ENCODE measurements at regions of chr18 and their contacts with region 1.

Region 1: DNA sequence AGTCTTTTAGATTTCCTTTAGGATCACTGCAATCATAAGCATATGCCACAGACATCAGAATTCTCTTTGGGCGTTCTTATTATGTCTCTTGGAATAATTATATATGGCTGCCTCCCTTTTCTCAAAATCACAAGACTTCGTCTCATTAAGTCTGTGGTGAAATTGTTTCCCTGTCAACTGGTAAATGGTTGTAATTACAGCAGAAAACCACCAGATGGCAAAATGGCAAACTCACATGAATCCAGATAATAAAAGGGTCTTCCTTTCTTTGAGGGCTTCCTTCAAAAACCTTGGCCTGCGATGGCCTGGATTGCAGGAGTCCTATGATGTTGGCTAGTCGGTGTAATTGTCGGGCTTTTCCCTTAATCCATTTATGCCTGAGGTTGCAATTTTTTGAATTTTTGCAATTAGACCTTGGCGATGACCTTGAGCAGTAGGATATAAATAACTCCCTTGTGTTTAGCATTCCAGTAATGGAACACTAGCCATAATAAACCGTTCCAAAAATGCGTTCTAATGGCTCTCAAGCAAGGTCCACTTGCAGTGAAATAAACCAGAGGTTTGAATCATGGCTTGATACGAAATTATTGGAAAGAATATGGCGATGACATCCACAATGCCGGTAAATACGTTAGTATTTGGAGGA is 656.4 kb downstream of the MBD2 start:
- DNase-seq: peak in 4 of 9 donors; percentile 1 to 10 (median 4)
- ATAC-seq: no peak
- H3K4me3 ChIP-seq: no peak overlapping the region
- H3K4me3 Mint-ChIP-seq: no peak overlapping the region
- H3K27ac ChIP-seq: no peak overlapping the region
- H3K27ac Mint-ChIP-seq: no peak overlapping the region
- H3K4me1 ChIP-seq: no peaks in the 10 kb centered on the region
- H3K4me1 Mint-ChIP-seq: no peaks in the 10 kb centered on the region
- H3K27me3 ChIP-seq: no peaks in the 10 kb centered on the region
- H3K27me3 Mint-ChIP-seq: peaks cover 0 to 11% (median 4%) of the 10 kb centered on the region in 5 donors

Region 2: GRCh38 chr18:52415131-52415530 is 1152.9 kb before region 1 on chr18:
- CTCF ChIA-PET with region 1: no interaction called
- POLR2A ChIA-PET with region 1: no interaction called
- intact Hi-C with region 1: no loop called
- DNase-seq: no peak
- ATAC-seq: no peak
- H3K4me3 ChIP-seq: no peak overlapping the region
- H3K4me3 Mint-ChIP-seq: no peak overlapping the region
- H3K27ac ChIP-seq: no peak overlapping the region
- H3K27ac Mint-ChIP-seq: no peak overlapping the region
- H3K4me1 ChIP-seq: no peaks in the 10 kb centered on the region
- H3K4me1 Mint-ChIP-seq: no peaks in the 10 kb centered on the region
- H3K27me3 ChIP-seq: no peaks in the 10 kb centered on the region
- H3K27me3 Mint-ChIP-seq: no peaks in the 10 kb centered on the region

Region 3: DNA sequence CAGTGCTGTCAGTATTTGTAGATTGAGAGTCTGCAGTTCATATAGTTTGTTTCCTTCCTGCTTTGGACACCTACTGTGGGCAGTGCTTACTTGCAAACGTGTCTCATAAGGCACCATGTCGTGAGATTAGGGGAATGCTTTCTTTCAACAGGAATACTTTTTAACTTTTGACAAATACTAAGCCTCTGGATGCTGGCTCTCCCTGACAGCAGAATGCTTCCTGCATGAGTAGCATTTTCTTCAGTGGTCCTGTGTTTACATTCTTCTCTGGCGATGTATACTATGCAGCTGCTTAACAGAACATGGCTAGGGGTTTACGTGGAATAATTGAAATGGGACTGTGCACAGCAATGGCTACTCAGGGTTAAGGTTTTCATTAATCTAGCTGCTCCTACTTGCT is 151.0 kb before region 1 on chr18:
- CTCF ChIA-PET with region 1: no interaction called
- POLR2A ChIA-PET with region 1: no interaction called
- intact Hi-C with region 1: no loop called
- DNase-seq: no peak
- ATAC-seq: no peak
- H3K4me3 ChIP-seq: no peak overlapping the region
- H3K4me3 Mint-ChIP-seq: no peak overlapping the region
- H3K27ac ChIP-seq: no peak overlapping the region
- H3K27ac Mint-ChIP-seq: no peak overlapping the region
- H3K4me1 ChIP-seq: no peaks in the 10 kb centered on the region
- H3K4me1 Mint-ChIP-seq: no peaks in the 10 kb centered on the region
- H3K27me3 ChIP-seq: no peaks in the 10 kb centered on the region
- H3K27me3 Mint-ChIP-seq: no peaks in the 10 kb centered on the region

Region 4: GRCh38 chr18:53909668-53910067 is 341.6 kb after region 1 on chr18:
- CTCF ChIA-PET with region 1: no interaction called
- POLR2A ChIA-PET with region 1: no interaction called
- intact Hi-C with region 1: loop called in 1 of 2 experiments (anchors 10 kb)
- DNase-seq: no peak
- ATAC-seq: no peak
- H3K4me3 ChIP-seq: no peak overlapping the region
- H3K4me3 Mint-ChIP-seq: no peak overlapping the region
- H3K27ac ChIP-seq: no peak overlapping the region
- H3K27ac Mint-ChIP-seq: no peak overlapping the region
- H3K4me1 ChIP-seq: no peaks in the 10 kb centered on the region
- H3K4me1 Mint-ChIP-seq: no peaks in the 10 kb centered on the region
- H3K27me3 ChIP-seq: no peaks in the 10 kb centered on the region
- H3K27me3 Mint-ChIP-seq: peaks cover 0 to 11% (median 5%) of the 10 kb centered on the region in 5 donors

Measured in naive thymus-derived CD4-positive, alpha-beta T cell (primary cell).